Natural killer cell (primary cell): ENCODE measurements at regions of chr7 and their contacts with region 1.

Region 1: DNA sequence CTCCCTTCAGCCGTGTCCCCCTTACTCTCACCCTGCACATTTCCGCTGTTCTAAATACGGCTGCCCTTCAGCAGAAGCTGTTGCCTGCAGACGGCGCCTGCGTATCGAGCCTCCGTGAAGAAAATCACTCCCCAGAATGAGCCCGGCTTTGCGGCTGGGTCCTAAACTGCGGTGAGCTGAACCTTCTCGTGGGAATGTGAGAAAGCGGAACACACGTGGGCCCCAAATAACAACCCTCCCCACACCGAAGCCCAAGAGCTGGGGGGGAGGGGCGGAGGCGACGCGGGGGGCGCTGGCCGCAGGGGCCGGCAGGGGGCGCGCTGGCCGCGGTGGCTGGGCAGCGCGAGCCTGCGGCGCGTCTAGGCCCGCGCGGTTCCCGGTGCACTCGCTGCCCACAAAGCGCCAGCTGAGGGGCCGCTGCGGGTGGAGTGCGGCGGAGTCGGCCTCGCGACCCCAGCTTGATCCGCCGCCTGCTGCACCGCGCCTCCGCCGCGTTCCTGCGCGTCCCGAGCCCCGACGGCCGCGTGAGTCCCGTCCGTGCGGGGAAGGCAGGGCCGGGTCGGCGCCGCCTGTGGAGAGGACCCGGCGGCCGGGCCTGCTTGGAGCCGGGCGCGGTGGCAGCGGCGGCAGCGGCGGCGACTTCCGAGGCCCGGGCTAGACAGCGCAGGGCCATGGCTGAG is at the start of gene ZNF398:
- DNase-seq: peak; percentile 83 to 93
- ATAC-seq: peak; percentile 81 to 94 (median 84)
- H3K4me3 ChIP-seq: peak within 1 kb of the TSS; percentile 70
- H3K4me3 Mint-ChIP-seq: peak within 1 kb of the TSS; percentile 86
- H3K27ac ChIP-seq: peak within 1 kb of the TSS; percentile 67
- H3K27ac Mint-ChIP-seq: peak within 1 kb of the TSS; percentile 84 to 89
- H3K4me1 ChIP-seq: peaks cover 26% of the 10 kb centered on the region
- H3K4me1 Mint-ChIP-seq: peaks cover 18 to 25% of the 10 kb centered on the region in 2 donors
- H3K27me3 ChIP-seq: no peaks in the 10 kb centered on the region
- H3K27me3 Mint-ChIP-seq: no peaks in the 10 kb centered on the region
- CTCF ChIP-seq: peak; percentile 69
- total RNA-seq, gene ZNF398: 14.8 to 18.5 (median 18.5) TPM

Region 2: GRCh38 chr7:148356303-148356702 is 790.9 kb before region 1 on chr7:
- intact Hi-C with region 1: no loop called
- DNase-seq: no peak
- ATAC-seq: no peak
- H3K4me3 ChIP-seq: no peak overlapping the region
- H3K4me3 Mint-ChIP-seq: no peak overlapping the region
- H3K27ac ChIP-seq: no peak overlapping the region
- H3K27ac Mint-ChIP-seq: no peak overlapping the region
- H3K4me1 ChIP-seq: no peaks in the 10 kb centered on the region
- H3K4me1 Mint-ChIP-seq: no peaks in the 10 kb centered on the region
- H3K27me3 ChIP-seq: no peaks in the 10 kb centered on the region
- H3K27me3 Mint-ChIP-seq: peaks cover 5 to 10% of the 10 kb centered on the region in 2 donors
- CTCF ChIP-seq: no peak

Region 3: GRCh38 chr7:149060156-149060555 is 87.1 kb before region 1 on chr7:
- intact Hi-C with region 1: no loop called
- DNase-seq: no peak
- ATAC-seq: no peak
- H3K4me3 ChIP-seq: no peak overlapping the region
- H3K4me3 Mint-ChIP-seq: no peak overlapping the region
- H3K27ac ChIP-seq: no peak overlapping the region
- H3K27ac Mint-ChIP-seq: no peak overlapping the region
- H3K4me1 ChIP-seq: peaks cover 8% of the 10 kb centered on the region
- H3K4me1 Mint-ChIP-seq: peaks cover 3 to 5% of the 10 kb centered on the region in 2 donors
- H3K27me3 ChIP-seq: no peaks in the 10 kb centered on the region
- H3K27me3 Mint-ChIP-seq: no peaks in the 10 kb centered on the region
- CTCF ChIP-seq: no peak

Region 4: GRCh38 chr7:149125863-149126661 is 21.1 kb before region 1 on chr7 and contains the start of gene ZNF425:
- intact Hi-C with region 1: loop called (anchors 1 kb)
- DNase-seq: peak; percentile 94 to 96
- ATAC-seq: peak; percentile 87 to 99 (median 91)
- H3K4me3 ChIP-seq: peak within 1 kb of the TSS; percentile 100
- H3K4me3 Mint-ChIP-seq: peak within 1 kb of the TSS; percentile 100
- H3K27ac ChIP-seq: peak within 1 kb of the TSS; percentile 88
- H3K27ac Mint-ChIP-seq: peak within 1 kb of the TSS; percentile 89 to 98
- H3K4me1 ChIP-seq: peaks cover 17% of the 10 kb centered on the region
- H3K4me1 Mint-ChIP-seq: peaks cover 25 to 36% of the 10 kb centered on the region in 2 donors
- H3K27me3 ChIP-seq: no peaks in the 10 kb centered on the region
- H3K27me3 Mint-ChIP-seq: no peaks in the 10 kb centered on the region
- CTCF ChIP-seq: peak; percentile 89
- total RNA-seq, gene ZNF425: 1.2 to 1.7 (median 1.4) TPM

Region 5: DNA sequence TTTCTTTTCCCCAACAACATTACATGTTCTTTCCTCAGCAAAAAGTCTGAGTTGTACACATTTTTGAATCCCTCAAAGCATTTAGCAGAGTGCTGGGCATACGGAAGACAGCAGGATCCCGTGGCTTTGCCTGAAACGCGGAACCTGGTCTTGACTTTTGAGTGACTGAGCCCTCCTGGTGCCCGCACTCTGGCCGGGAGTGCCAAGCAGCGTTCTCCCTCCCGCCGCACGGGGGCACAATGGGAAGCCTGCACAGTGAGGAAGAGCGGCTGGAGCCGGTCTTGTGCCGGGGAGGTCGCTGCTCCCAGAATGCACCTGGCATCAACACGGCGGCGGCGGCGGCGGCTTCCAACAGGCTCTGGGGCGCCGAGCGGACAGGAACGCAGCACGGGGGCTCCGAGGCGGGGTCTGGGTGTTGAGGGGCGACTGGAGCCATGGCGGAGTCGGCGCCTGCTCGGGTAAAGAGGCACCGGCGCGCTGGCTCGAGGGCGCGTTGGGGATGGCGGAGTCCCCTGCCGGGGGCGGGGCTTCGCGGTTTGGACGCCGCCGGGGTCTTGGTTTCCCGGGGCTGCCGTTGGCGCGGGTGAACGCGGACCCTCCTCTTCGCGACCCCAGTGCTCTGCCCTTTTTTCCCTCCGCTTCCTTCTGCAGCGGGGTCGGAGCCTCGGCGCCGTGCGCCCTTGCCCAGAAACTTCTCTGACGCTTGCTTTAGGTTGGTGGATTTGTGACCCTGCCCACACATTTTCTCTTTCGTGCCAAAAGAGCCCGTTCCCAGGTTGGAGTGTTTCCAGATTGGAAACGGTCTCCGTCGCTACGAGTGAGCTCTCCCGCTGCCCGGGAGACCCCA is 92.4 kb after region 1 on chr7 and contains the start of gene ZNF212:
- intact Hi-C with region 1: loop called (anchors 5 kb)
- DNase-seq: peak; percentile 82 to 92
- ATAC-seq: peak; percentile 99 to 100 (median 100)
- H3K4me3 ChIP-seq: peak within 1 kb of the TSS; percentile 91
- H3K4me3 Mint-ChIP-seq: peak within 1 kb of the TSS; percentile 93
- H3K27ac ChIP-seq: peak within 1 kb of the TSS; percentile 53
- H3K27ac Mint-ChIP-seq: peak within 1 kb of the TSS; percentile 79 to 91
- H3K4me1 ChIP-seq: peaks cover 18% of the 10 kb centered on the region
- H3K4me1 Mint-ChIP-seq: peaks cover 21 to 24% of the 10 kb centered on the region in 2 donors
- H3K27me3 ChIP-seq: peaks cover 2% of the 10 kb centered on the region
- H3K27me3 Mint-ChIP-seq: peaks cover 0 to 4% of the 10 kb centered on the region in 2 donors
- CTCF ChIP-seq: peak; percentile 77
- total RNA-seq, gene ZNF212: 11.2 to 23.7 (median 17.0) TPM